ENCODE measurements at regions of chr7 and their contacts with region 1.

Region 1: DNA sequence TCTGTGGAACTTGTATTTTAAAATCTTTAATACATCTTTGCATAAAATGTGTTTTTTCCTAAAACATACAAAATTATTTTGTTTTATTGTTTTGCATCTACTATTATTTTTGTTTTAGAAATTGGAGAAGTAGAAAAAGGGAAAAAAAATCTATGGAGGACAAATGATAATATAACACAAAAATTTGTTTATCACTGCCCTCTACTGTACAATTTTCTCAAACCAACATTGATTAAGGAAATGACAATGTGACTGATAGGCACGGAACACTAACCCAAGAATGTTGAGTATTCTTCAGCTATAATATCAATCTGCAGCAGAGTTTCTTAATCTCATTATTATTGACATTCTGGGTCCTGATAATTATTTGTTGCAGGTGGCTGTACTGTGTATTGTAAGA is 9.5 kb upstream of the ING3 start:
- DNase-seq: no peak
- ATAC-seq: peak; percentile 65

Region 2: GRCh38 chr7:120805636-120806388 is 135.3 kb before region 1 on chr7:
- intact Hi-C with region 1: loop called in 1 of 2 experiments (anchors 5 kb)
- DNase-seq: peak in 1 of 2 donors; percentile 53
- ATAC-seq: peak; percentile 56

Region 3: DNA sequence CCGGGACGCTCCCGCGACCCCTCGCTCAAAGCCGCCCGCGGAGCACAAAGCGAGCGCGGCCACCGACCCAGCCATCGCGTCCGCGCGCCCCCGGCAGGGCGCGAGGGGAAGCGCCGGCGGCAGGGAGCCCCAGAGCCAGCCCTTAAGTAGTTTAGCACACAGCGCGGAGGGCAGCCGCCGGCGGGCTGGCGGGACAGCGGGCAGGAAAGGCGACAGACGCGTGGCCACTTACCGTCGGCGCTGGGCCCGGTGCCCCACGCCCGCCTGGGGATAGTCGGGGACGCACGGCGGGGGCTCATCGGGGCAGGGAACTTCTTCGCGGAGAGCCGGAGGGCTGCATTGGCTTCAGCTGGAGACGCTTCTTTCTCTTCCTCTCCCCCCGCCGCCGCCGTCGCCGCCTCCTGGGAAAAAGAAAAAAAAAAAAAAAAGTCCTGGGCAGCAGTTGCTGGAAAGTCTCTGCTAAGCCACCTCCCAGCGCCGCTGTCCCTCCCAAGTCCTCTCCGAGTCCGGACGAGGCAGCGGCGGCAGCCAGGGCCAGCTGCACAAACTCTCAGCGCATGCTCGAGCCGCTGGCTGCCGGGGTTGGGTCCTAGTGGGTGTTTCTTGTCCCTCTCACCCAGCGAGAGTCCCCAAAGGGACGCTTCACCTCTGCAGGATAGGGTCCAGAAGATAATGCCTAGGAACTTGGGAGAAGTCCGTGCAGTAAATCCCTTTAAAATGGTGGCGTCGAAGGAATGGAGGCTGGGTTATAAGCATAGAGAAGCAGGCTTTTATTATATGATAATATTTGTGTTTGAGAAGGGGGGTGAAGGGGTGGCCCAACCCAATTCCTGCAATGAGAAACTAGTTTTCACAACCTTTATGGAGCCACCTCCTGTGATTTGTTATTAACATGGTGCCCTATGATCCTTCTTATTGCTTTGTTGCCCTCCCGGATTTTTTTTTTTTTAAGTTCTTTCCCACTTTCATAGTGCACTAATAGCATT is 83.2 kb before region 1 on chr7 and contains the start of gene TSPAN12:
- intact Hi-C with region 1: loop called in 1 of 2 experiments (anchors 10 kb)
- DNase-seq: peak; percentile 83
- ATAC-seq: peak; percentile 83
- total RNA-seq, gene TSPAN12: 30.3 to 32.1 TPM

Region 4: DNA sequence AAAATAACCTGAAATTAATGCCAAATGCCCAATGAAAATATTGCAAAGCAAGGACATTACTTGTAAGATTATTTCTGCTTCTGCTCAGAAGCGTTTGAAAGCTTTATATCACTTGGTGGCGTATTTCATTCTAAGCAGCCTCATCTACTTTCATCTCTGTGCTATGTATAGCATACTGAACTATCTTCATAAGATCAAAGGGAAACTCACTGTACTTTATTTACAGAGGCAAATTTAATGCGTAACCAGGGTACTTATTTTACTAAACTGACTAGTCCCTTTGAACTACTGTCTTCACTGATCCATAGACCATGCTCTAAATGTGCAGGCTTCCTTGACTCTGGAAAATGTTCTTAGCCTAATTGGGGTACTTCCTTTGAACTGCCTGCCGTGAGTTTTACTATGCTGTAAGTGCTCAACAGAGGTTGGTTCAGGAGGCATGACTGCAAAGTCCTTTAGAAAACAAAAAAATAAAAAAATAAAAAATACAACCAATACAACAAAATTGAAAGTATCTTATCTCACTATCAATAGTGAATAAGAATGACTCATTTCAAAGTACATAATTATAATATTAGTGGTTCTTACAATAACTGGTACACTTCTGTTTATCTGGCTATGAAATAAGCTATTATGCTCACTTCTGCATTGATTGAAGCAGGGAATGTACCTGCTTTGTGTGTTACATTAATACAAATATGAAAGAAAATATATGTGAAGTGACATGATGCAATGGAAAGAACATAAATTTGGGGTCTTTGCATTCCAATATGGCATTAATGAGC is 42.2 kb before region 1 on chr7:
- intact Hi-C with region 1: no loop called
- DNase-seq: no peak
- ATAC-seq: no peak

Measured in left colon (tissue), 2 donors.